OCI-LY7 (cell line): ENCODE measurements at regions of chr1 and their contacts with region 1.

Region 1: GRCh38 chr1:111755331-111756123 is at the start of gene DDX20:
- DNase-seq: peak; percentile 95
- H3K4me3 ChIP-seq: peak within 1 kb of the TSS; percentile 83
- H3K27ac ChIP-seq: peak within 1 kb of the TSS; percentile 81
- H3K4me1 ChIP-seq: peaks cover 59% of the 10 kb centered on the region
- CTCF ChIP-seq: peak; percentile 94
- total RNA-seq, gene DDX20: 28.8 and 32.9 TPM in 2 replicates

Region 2: GRCh38 chr1:111139956-111140679 is 615.4 kb before region 1 on chr1 and contains the starts of genes CEPT1 and DRAM2:
- CTCF ChIA-PET with region 1: no interaction called
- POLR2A ChIA-PET with region 1: no interaction called
- intact Hi-C with region 1: loop called (anchors 10 kb)
- DNase-seq: peak; percentile 97
- H3K4me3 ChIP-seq: peak within 1 kb of the TSS; percentile 94
- H3K27ac ChIP-seq: peak within 1 kb of the TSS; percentile 91
- H3K4me1 ChIP-seq: peaks cover 55% of the 10 kb centered on the region
- CTCF ChIP-seq: no peak
- total RNA-seq, gene CEPT1: 41.5 and 44.9 TPM in 2 replicates
- total RNA-seq, gene DRAM2: 75.2 and 84.2 TPM in 2 replicates

Region 3: GRCh38 chr1:111481387-111482221 is 273.9 kb before region 1 on chr1:
- CTCF ChIA-PET with region 1: interaction called, 4 read pairs
- POLR2A ChIA-PET with region 1: interaction called, 5 read pairs
- intact Hi-C with region 1: loop called (anchors 5 kb)
- DNase-seq: peak; percentile 65
- H3K4me3 ChIP-seq: no peak overlapping the region
- H3K27ac ChIP-seq: no peak overlapping the region
- H3K4me1 ChIP-seq: peaks cover 21% of the 10 kb centered on the region
- CTCF ChIP-seq: peak; percentile 78

Region 4: GRCh38 chr1:111719674-111720132 is 35.8 kb before region 1 on chr1:
- CTCF ChIA-PET with region 1: interaction called, 3 read pairs
- POLR2A ChIA-PET with region 1: interaction called, 4 read pairs
- intact Hi-C with region 1: loop called (anchors 2 kb)
- DNase-seq: no peak
- H3K4me3 ChIP-seq: no peak overlapping the region
- H3K27ac ChIP-seq: no peak overlapping the region
- H3K4me1 ChIP-seq: peaks cover 11% of the 10 kb centered on the region
- CTCF ChIP-seq: no peak